Activated CD4-positive, alpha-beta T cell treated with anti-CD3 and anti-CD28 coated beads for 36 hours (primary cell): ENCODE measurements at regions of chr19 and their contacts with region 1.

Region 1: DNA sequence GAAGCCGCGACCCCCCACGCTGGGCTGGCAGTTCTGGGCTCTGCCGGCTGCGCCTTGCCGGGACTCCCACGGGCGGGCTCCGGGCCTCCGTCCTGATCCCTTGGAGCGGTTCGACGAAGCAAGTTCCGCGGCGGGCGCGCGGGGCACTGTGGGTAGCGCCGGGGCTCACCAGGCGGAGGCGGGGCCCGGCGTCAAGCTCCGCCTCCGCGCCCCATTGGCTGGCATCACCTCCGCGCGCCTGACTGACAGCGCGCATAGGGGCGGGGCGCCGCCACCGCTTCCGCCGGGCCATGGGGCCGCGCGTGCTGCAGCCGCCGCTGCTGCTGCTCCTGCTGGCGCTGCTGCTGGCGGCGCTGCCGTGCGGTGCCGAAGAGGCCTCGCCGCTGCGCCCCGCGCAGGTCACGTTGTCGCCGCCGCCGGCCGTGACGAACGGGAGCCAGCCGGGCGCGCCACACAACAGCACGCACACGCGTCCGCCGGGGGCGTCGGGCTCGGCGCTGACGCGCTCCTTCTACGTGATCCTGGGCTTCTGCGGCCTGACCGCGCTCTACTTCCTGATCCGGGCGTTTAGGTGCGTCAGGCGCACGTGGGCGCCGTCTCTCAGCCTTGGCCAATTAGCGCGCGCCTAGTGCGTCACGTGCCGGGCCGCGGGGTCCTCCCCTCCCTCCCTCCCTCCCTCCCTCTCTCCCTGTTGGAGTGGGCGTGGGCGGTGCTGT is at the start of gene FAM174C:
- DNase-seq: peak; percentile 99
- ATAC-seq: peak; percentile 82
- H3K4me3 Mint-ChIP-seq: peak within 1 kb of the TSS; percentile 83
- H3K27ac Mint-ChIP-seq: peak within 1 kb of the TSS; percentile 95
- H3K4me1 Mint-ChIP-seq: peaks cover 54% of the 10 kb centered on the region
- H3K27me3 Mint-ChIP-seq: no peaks in the 10 kb centered on the region
- total RNA-seq, gene FAM174C: 75.3 to 88.3 TPM

Region 2: DNA sequence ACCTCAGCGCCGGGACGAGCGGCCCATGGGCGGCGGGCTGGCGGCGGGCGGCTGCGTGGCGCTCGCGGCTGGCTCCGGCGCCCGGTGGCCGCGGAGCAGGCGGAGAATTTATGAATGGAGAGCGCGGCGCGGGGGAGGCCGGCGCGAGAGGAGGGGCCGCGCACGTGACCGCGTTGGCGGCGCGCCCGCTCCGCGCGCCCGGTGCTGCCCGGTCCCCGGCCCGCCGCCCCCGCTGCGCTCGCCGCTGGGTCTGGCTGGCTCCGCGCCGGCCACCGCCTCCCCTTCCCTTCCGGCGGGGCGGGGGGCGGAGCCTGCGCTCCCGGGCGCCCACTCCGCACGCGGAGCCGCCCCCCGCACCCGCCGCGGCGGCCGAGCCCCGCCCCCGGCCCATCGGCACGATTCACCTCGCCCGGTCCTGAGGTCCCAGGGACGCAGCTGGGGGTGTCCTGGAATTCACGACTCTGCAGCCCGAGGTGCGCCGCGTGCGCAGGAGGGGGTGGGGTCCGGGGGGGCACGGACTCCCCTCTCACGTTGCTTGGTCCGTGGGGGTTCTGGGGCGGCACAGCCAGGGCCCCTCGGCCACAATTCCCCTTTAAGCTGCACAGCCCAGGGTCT is 37.6 kb before region 1 on chr19 and contains the start of gene CBARP:
- CTCF ChIA-PET with region 1: no interaction called
- POLR2A ChIA-PET with region 1: no interaction called
- intact Hi-C with region 1: no loop called
- DNase-seq: peak; percentile 51
- ATAC-seq: no peak
- H3K4me3 Mint-ChIP-seq: peak within 1 kb of the TSS; percentile 54
- H3K27ac Mint-ChIP-seq: no peak within 1 kb of the TSS
- H3K4me1 Mint-ChIP-seq: peaks cover 27% of the 10 kb centered on the region
- H3K27me3 Mint-ChIP-seq: peaks cover 6% of the 10 kb centered on the region
- total RNA-seq, gene CBARP: 0.82 to 1.1 TPM

Region 3: DNA sequence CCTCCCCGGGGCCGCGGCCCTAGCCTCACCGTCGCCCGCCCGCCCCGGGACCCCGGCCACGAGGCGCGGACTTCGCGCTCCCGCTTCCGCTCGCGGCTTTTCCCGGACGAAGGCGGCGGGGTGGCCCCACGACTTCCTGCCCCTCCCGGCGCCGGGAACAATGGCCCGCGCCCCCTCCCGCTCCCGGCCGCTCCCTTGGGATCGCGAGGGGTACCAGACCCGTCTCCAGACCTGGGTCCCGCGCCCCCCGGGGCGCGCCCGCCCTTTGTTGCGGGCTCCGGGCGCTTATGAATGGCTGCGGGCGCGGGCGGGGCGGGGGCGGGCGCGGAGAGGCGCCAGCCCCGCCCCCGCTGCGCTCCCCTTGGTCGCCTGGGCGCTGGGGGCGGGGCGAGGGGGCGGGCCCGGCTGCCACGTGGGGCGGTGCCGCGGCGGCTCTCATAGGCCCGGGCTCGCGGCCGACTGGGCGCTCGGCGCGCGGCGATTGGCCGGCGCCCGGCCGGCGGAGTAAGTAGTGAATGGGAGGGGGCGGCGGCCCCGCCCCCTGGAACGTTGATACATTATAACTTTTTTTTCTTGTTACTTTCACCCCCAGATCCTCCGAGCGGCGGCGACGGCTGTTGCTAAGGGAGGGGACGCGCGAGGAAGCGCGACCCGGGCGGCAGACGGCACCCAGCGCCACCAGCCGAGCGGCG is 26.0 kb before region 1 on chr19:
- CTCF ChIA-PET with region 1: interaction called, 21 read pairs
- POLR2A ChIA-PET with region 1: interaction called, 5 read pairs
- intact Hi-C with region 1: loop called in 1 of 2 experiments (anchors 1 kb)
- DNase-seq: peak; percentile 97
- ATAC-seq: peak; percentile 53
- H3K4me3 Mint-ChIP-seq: peak overlapping the region; percentile 73
- H3K27ac Mint-ChIP-seq: no peak overlapping the region
- H3K4me1 Mint-ChIP-seq: peaks cover 9% of the 10 kb centered on the region
- H3K27me3 Mint-ChIP-seq: no peaks in the 10 kb centered on the region

Region 4: DNA sequence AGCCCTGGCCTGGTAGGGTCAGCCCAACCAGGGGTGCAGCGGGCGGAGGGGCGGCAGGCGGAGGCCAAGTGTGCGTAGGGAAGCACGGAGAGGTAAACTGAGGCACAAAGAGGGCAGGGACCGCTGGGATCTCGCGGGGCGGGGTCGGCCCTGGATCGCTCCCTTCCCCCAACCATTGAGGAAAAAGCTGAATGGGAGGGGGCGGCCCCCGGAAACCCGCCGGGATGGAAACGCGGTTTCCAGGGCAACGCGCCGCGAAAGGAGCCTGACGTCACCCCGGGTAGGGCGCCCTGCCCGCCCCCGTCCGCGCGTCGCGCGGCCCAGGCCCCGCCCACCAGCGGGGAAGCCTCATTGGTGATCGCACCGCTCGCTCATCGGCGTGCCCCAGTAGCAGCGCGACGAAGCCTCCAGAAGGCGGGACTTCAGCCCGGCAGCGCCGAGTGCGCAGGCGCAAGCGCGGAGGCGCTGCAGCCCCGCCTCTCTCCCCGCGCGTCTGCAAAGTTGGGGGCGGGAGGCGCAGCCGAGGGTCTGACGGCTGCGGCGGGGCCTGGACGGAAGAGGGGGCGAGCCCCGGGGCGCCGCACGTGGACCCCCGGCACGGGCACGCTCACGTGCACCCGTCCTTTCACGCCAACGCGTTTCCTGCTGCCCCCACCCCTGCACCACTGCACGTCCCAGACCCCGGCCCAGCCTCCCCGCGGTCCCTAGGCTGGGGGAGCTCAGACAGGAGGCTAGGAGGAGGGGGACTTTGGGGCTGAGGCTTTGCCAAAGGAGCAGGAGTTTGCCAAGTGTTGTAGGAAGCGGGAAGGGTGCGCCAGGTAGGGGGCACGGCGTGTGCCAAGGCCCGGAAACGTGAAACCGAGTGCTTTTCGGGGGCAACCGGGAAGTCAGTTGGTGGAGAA is 14.5 kb before region 1 on chr19:
- CTCF ChIA-PET with region 1: no interaction called
- POLR2A ChIA-PET with region 1: interaction called, 4 read pairs
- intact Hi-C with region 1: loop called in 1 of 2 experiments (anchors 1 kb)
- DNase-seq: peak; percentile 99
- ATAC-seq: peak; percentile 82
- H3K4me3 Mint-ChIP-seq: peak overlapping the region; percentile 95
- H3K27ac Mint-ChIP-seq: peak overlapping the region; percentile 87
- H3K4me1 Mint-ChIP-seq: peaks cover 54% of the 10 kb centered on the region
- H3K27me3 Mint-ChIP-seq: no peaks in the 10 kb centered on the region

Region 5: GRCh38 chr19:1355568-1356507 is 80.4 kb after region 1 on chr19:
- CTCF ChIA-PET with region 1: interaction called, 5 read pairs
- POLR2A ChIA-PET with region 1: no interaction called
- intact Hi-C with region 1: loop called (anchors 1 to 5 kb)
- DNase-seq: peak; percentile 51
- ATAC-seq: no peak
- H3K4me3 Mint-ChIP-seq: peak overlapping the region; percentile 77
- H3K27ac Mint-ChIP-seq: peak overlapping the region; percentile 49
- H3K4me1 Mint-ChIP-seq: peaks cover 9% of the 10 kb centered on the region
- H3K27me3 Mint-ChIP-seq: no peaks in the 10 kb centered on the region

Region 6: GRCh38 chr19:1438035-1438932 is 162.9 kb after region 1 on chr19 and contains the start of gene RPS15:
- CTCF ChIA-PET with region 1: interaction called, 3 read pairs
- POLR2A ChIA-PET with region 1: no interaction called
- intact Hi-C with region 1: loop called in 1 of 2 experiments (anchors 1 kb)
- DNase-seq: peak; percentile 98
- ATAC-seq: peak; percentile 86
- H3K4me3 Mint-ChIP-seq: peak within 1 kb of the TSS; percentile 94
- H3K27ac Mint-ChIP-seq: peak within 1 kb of the TSS; percentile 99
- H3K4me1 Mint-ChIP-seq: peaks cover 34% of the 10 kb centered on the region
- H3K27me3 Mint-ChIP-seq: no peaks in the 10 kb centered on the region
- total RNA-seq, gene RPS15: 1,716 to 1,858 TPM

Region 7: DNA sequence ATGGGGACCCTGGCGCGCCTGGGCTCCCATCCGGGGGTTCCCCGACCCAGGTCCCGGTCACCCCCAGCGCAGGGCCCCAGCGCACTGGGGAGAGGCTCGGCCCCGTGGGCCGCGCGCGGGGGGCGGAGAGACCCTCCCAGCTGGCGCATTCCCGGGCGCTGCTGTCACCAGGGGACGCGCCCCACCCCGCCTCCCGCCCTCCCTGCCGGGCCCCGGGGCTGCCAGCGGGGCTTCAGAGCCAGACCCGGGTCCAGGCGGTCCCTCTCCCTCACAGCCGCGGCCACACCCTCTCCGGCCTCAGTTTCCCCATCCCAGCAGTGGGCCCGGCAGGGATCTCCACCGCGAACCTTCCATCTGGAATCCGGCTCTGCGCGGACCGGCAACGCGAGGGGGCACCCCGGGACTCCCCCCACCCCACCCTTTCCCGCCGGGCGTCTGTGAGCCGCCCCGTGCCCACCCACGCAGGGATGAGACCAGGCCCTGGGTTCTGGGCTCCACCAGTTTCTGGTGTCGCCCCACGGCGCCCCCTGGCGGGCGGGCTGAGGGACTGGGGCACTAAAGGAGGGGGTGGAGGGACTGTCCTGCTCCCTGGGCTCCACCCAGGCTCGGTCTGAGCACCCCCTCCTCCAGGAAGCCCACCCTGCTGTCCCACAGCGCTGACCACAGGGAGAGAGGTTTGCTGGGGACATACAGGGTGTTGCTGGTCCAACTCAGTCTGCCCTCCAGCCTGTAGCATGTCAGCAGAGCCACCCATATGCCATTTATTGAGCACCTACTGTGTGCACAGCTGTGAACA is 238.3 kb after region 1 on chr19:
- CTCF ChIA-PET with region 1: no interaction called
- POLR2A ChIA-PET with region 1: no interaction called
- intact Hi-C with region 1: loop called in 1 of 2 experiments (anchors 2 kb)
- DNase-seq: peak; percentile 88
- ATAC-seq: peak; percentile 60
- H3K4me3 Mint-ChIP-seq: no peak overlapping the region
- H3K27ac Mint-ChIP-seq: no peak overlapping the region
- H3K4me1 Mint-ChIP-seq: peaks cover 7% of the 10 kb centered on the region
- H3K27me3 Mint-ChIP-seq: no peaks in the 10 kb centered on the region

Region 8: GRCh38 chr19:1592755-1593500 is 317.5 kb after region 1 on chr19 and contains the start of gene MBD3:
- CTCF ChIA-PET with region 1: no interaction called
- POLR2A ChIA-PET with region 1: no interaction called
- intact Hi-C with region 1: loop called in 1 of 2 experiments (anchors 2 kb)
- DNase-seq: peak; percentile 93
- ATAC-seq: peak; percentile 85
- H3K4me3 Mint-ChIP-seq: peak within 1 kb of the TSS; percentile 94
- H3K27ac Mint-ChIP-seq: peak within 1 kb of the TSS; percentile 93
- H3K4me1 Mint-ChIP-seq: peaks cover 20% of the 10 kb centered on the region
- H3K27me3 Mint-ChIP-seq: no peaks in the 10 kb centered on the region
- total RNA-seq, gene MBD3: 68.9 to 87.5 TPM